ENCODE measurements at regions of chr2 and their contacts with region 1.

Region 1: GRCh38 chr2:48420512-48421197 is 109.3 kb upstream of the STON1 start:
- DNase-seq: peak; percentile 90
- H3K4me3 ChIP-seq: no peak overlapping the region
- H3K27ac ChIP-seq: no peak overlapping the region
- H3K4me1 ChIP-seq: no peaks in the 10 kb centered on the region
- H3K27me3 ChIP-seq: no peaks in the 10 kb centered on the region
- CTCF ChIP-seq: peak; percentile 98

Region 2: GRCh38 chr2:47862949-47863348 is 557.7 kb before region 1 on chr2:
- CTCF ChIA-PET with region 1: no interaction called
- POLR2A ChIA-PET with region 1: no interaction called
- intact Hi-C with region 1: loop called (anchors 5 kb)
- DNase-seq: no peak
- H3K4me3 ChIP-seq: no peak overlapping the region
- H3K27ac ChIP-seq: no peak overlapping the region
- H3K4me1 ChIP-seq: peaks cover 9% of the 10 kb centered on the region
- H3K27me3 ChIP-seq: no peaks in the 10 kb centered on the region
- CTCF ChIP-seq: no peak

Region 3: GRCh38 chr2:48124592-48124991 is 296.1 kb before region 1 on chr2:
- CTCF ChIA-PET with region 1: no interaction called
- POLR2A ChIA-PET with region 1: interaction called, 11 read pairs
- intact Hi-C with region 1: no loop called
- DNase-seq: no peak
- H3K4me3 ChIP-seq: no peak overlapping the region
- H3K27ac ChIP-seq: no peak overlapping the region
- H3K4me1 ChIP-seq: no peaks in the 10 kb centered on the region
- H3K27me3 ChIP-seq: no peaks in the 10 kb centered on the region
- CTCF ChIP-seq: no peak

Measured in A673 (cell line).